ENCODE measurements at regions of chr11 and their contacts with region 1.

Region 1: GRCh38 chr11:18775492-18776292 is 15.9 kb downstream of the PTPN5 start:
- DNase-seq: peak; percentile 38
- ATAC-seq: peak; percentile 95
- H3K4me3 ChIP-seq: no peak overlapping the region
- H3K27ac ChIP-seq: no peak overlapping the region
- H3K4me1 ChIP-seq: no peaks in the 10 kb centered on the region
- H3K27me3 ChIP-seq: no peaks in the 10 kb centered on the region; the same call in 1 of the 2 replicates
- CTCF ChIP-seq: peak; percentile 94

Region 2: GRCh38 chr11:18368221-18368620 is 407.5 kb before region 1 on chr11:
- CTCF ChIA-PET with region 1: no interaction called
- POLR2A ChIA-PET with region 1: no interaction called
- in situ Hi-C with region 1: no loop called
- intact Hi-C with region 1: no loop called
- DNase-seq: no peak
- ATAC-seq: 0 out of 2 replicates have a peak, but pooled peaks have one; percentile 47
- H3K4me3 ChIP-seq: no peak overlapping the region
- H3K27ac ChIP-seq: no peak overlapping the region
- H3K4me1 ChIP-seq: no peaks in the 10 kb centered on the region
- H3K27me3 ChIP-seq: no peaks in the 10 kb centered on the region
- CTCF ChIP-seq: no peak

Region 3: GRCh38 chr11:18802381-18803257 is 26.9 kb after region 1 on chr11:
- CTCF ChIA-PET with region 1: interaction called, 5 read pairs
- POLR2A ChIA-PET with region 1: no interaction called
- in situ Hi-C with region 1: no loop called
- intact Hi-C with region 1: loop called (anchors 2 kb)
- DNase-seq: peak; percentile 20
- ATAC-seq: peak; percentile 84
- H3K4me3 ChIP-seq: no peak overlapping the region
- H3K27ac ChIP-seq: no peak overlapping the region
- H3K4me1 ChIP-seq: no peaks in the 10 kb centered on the region
- H3K27me3 ChIP-seq: peaks cover 11% of the 10 kb centered on the region
- CTCF ChIP-seq: peak; percentile 80

Region 4: GRCh38 chr11:18853086-18853720 is 77.5 kb after region 1 on chr11:
- CTCF ChIA-PET with region 1: interaction called, 3 read pairs
- POLR2A ChIA-PET with region 1: no interaction called
- in situ Hi-C with region 1: no loop called
- intact Hi-C with region 1: loop called (anchors 1 kb)
- DNase-seq: no peak
- ATAC-seq: peak; percentile 88
- H3K4me3 ChIP-seq: no peak overlapping the region
- H3K27ac ChIP-seq: no peak overlapping the region
- H3K4me1 ChIP-seq: no peaks in the 10 kb centered on the region
- H3K27me3 ChIP-seq: peaks cover 6% of the 10 kb centered on the region; the same call in 1 of the 2 replicates
- CTCF ChIP-seq: peak; percentile 77

Measured in Panc1 (cell line).